ENCODE measurements at regions of chr12 and their contacts with region 1.

Region 1: DNA sequence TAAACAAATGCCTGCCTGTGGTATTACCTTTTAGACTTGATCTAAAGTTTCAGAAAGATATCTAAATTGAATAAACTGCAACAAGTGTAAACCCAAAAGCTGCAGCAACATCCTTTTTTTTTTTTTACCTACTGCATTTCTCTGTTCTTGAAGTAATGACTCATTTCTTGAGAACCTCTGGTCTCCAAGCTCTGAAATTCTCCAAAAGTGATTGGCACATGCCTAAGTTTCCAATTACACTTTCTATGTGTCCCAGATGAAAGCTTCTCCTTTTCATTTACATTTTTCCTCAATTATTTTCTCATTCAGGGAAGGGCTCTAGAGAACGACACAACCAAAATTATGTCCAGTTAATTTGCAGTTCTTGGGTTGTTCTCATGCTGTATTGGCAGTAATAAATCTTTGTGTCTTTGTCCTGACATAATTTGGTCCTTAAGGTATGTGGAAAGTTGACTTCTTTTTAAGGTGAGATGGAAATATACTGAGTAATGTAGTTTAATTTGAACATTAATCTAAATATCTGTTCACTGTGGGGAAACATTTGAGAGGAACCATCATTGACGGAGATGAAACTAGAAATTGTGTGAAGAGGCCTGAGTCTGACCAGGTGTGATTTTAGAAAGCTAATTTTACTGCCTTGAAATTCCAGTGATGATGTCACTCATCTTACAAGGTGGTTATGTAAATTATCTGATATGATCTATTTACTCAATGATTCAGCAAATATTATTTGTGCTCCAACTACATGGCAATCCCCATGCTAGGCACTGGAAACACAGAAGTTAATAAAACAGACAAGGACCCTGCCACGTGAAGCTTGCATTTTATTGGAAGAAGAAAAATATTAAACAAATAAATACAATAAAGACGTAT is 435.4 kb upstream of the DCN start:
- DNase-seq: peak; percentile 57
- ATAC-seq: peak; percentile 50
- H3K4me3 ChIP-seq: no peak overlapping the region
- H3K27ac ChIP-seq: peak overlapping the region; percentile 77
- H3K4me1 ChIP-seq: peaks cover 21% of the 10 kb centered on the region
- H3K27me3 ChIP-seq: no peaks in the 10 kb centered on the region
- CTCF ChIP-seq: no peak

Region 2: DNA sequence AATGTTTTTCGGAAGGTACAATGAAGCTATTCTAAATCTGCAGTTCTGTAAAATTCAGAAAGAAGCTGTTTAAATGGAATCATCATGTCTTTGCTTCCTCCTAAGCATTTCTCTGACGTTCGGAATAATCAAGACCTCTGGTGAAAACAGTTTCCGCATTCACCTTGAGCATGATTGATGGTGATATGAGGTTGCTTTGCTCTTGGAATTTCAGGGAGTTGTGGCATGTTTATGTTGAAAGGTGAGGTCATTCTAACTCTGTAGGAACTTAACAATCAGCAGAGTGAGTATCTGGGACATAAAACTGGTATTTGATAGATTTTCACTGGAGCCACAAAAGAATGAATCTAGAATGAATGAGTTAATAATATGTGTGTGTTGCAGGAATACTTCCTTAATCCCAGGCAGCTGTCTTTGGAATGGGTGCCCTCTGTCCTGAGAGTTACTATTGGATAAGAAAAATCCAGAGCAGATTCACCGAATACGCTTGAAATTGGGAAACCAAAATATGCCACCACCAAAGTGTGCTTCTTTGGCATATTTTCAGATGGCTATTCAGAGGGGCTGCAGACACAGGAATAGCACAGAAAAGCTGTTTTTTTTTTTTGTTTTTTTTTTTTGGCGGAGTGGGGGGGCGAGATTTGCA is 1262.2 kb before region 1 on chr12:
- CTCF ChIA-PET with region 1: no interaction called
- POLR2A ChIA-PET with region 1: interaction called, 16 read pairs
- intact Hi-C with region 1: no loop called
- DNase-seq: no peak
- ATAC-seq: no peak
- H3K4me3 ChIP-seq: no peak overlapping the region
- H3K27ac ChIP-seq: no peak overlapping the region
- H3K4me1 ChIP-seq: peaks cover 3% of the 10 kb centered on the region; the same call in 1 of the 2 replicates
- H3K27me3 ChIP-seq: no peaks in the 10 kb centered on the region
- CTCF ChIP-seq: no peak